ENCODE measurements at regions of chr17 and their contacts with region 1.

Region 1: GRCh38 chr17:40121181-40122135 is at the start of gene MSL1:
- DNase-seq: no peak
- ATAC-seq: peak; percentile 79
- H3K4me3 ChIP-seq: peak within 1 kb of the TSS; percentile 76 to 93
- H3K27ac ChIP-seq: peak within 1 kb of the TSS; percentile 92
- H3K4me1 ChIP-seq: peaks cover 15% of the 10 kb centered on the region
- H3K27me3 ChIP-seq: no peaks in the 10 kb centered on the region
- CTCF ChIP-seq: no peak
- total RNA-seq, gene MSL1: 96.3 TPM

Region 2: DNA sequence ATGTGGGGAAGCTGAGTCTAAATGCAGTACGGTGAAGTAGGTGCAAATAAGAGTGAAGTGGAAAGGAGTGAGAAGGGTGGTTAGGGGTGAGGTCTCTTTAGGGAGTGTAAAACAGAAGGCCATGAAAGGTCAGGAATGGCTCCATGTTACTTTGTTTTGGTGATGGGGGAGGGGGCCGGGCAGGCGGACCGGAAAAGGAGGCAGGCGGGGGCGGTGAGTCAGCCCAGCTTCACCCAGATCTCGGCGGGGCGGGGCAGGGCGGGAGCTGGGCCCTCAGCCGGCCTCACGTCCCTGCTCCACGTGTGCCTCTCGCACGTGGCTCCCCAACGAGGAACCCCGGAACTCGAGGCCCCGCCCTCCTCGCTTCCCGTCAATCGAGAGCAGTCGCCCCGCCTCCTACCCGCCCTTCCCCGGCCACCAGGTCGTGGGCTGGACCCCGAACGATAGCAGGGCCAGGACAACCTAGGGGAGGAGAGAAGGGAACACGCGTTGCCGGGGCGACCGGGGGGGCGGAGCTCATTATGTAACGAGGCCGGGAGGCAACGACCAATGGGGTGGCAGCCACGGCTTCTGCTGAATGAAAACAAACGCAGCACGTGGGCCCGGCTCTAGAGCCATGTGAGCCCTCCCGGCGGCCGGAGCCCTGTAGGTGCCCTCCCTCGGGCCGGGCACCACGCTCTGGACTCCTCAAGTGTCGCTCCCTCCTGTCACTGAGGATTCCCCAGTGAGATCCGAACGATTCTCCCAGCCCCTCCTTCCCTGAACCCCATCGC is 22.4 kb before region 1 on chr17:
- CTCF ChIA-PET with region 1: no interaction called
- POLR2A ChIA-PET with region 1: interaction called, 12 read pairs
- in situ Hi-C with region 1: no loop called
- intact Hi-C with region 1: no loop called
- DNase-seq: peak; percentile 97
- ATAC-seq: peak; percentile 85
- H3K4me3 ChIP-seq: peak overlapping the region; percentile 87 to 98
- H3K27ac ChIP-seq: peak overlapping the region; percentile 89
- H3K4me1 ChIP-seq: peaks cover 32% of the 10 kb centered on the region
- H3K27me3 ChIP-seq: no peaks in the 10 kb centered on the region
- CTCF ChIP-seq: no peak

Region 3: DNA sequence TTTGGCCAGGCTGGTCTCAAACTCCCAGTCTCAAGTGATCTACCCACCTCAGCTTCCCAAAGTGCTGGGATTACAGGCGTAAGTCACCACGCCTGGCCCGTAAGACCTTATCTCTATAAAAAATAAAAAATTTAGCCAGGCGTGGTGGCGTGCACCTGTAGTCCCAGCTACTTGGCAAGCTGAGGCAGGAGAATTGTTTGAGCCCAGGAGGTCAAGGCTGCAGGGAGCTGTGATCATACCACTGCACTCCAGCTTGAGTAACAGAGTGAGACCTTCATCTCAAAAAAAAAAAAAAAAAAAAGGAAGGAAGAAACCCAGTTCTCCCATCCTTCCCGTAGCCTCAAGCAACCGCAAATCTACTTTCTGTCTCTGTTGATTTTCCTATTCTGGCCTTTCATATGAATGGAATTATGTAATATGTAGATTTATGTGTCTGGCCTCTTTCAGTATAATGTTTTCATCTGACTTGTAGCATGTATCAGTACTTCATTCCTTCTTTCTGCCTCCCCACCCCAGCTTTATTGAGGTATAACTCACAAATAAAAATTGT is 30.0 kb after region 1 on chr17:
- CTCF ChIA-PET with region 1: no interaction called
- POLR2A ChIA-PET with region 1: interaction called, 10 read pairs
- in situ Hi-C with region 1: no loop called
- intact Hi-C with region 1: no loop called
- DNase-seq: no peak
- ATAC-seq: no peak
- H3K4me3 ChIP-seq: no peak overlapping the region
- H3K27ac ChIP-seq: no peak overlapping the region
- H3K4me1 ChIP-seq: no peaks in the 10 kb centered on the region
- H3K27me3 ChIP-seq: no peaks in the 10 kb centered on the region
- CTCF ChIP-seq: no peak

Region 4: DNA sequence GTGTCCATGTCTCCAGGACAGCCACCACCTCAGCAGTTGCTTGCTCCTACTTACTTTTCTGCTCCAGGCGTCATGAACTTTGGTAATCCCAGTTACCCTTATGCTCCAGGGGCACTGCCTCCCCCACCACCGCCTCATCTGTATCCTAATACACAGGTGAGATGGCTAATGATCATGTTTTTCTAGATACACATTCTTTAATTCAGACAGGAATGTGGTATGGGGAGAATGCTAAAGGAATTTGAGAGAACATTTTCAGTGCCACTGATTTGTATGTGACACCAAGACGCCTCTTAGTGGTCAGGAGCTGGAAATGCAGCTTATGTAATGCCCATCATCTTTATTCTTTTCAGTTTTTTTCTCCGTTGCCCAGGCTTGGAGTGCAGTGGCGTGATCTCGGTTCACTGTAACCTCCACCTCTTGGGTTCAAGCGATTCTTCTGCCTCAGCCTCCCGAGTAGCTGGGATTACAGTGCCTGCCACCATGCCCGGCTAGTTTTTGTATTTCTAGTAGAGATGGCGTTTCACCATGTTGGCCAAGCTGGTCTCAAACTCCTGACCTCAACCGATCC is 46.9 kb after region 1 on chr17:
- CTCF ChIA-PET with region 1: interaction called, 6 read pairs
- POLR2A ChIA-PET with region 1: interaction called, 13 read pairs
- in situ Hi-C with region 1: no loop called
- intact Hi-C with region 1: no loop called
- DNase-seq: peak; percentile 41
- ATAC-seq: peak; percentile 83
- H3K4me3 ChIP-seq: no peak overlapping the region
- H3K27ac ChIP-seq: no peak overlapping the region
- H3K4me1 ChIP-seq: no peaks in the 10 kb centered on the region
- H3K27me3 ChIP-seq: no peaks in the 10 kb centered on the region
- CTCF ChIP-seq: peak; percentile 87

Region 5: DNA sequence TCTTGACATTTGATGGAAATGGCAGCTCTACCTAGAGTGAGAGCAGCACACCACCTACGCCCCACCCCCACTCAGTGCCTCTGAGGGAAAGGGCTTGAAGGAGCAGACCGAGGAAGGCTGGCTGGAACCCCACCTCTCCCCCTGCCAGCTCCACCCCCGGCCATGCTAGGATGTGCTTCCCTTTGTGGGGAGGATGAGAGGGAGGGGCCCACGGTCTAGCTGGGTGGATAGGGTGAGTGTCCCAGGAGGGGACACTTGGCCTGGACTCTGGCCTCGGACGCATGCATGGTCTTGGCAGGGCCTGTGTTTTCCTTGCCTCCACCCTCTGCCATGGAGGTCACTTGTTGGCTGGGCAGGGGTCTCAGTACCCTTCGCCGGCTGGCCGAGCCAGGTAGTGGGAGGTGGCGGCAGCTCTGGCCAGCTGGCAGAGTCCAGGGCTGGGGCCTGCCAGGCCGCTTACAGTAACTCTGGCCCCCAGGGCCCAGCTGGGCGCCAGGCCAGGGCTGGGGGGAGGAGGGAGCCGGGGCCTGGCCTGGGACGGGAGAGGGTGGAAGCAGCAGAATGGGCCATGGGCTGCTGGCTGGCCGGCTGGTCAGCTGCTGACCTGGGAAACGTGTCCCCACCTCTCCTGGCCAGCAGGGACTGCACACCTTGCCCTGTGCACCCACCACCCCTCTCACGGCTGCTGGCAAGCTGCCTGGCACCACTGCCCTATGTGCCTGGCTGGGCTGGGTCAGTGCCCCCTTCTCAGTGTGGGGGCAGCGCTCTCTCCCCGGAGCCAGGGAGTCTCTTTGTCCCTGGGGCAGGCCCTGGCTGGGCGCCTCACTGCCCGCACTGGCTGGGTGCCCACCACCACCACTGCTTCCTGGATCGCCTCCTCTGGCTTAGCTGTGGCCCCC is 210.5 kb after region 1 on chr17:
- CTCF ChIA-PET with region 1: no interaction called
- POLR2A ChIA-PET with region 1: no interaction called
- in situ Hi-C with region 1: no loop called
- intact Hi-C with region 1: no loop called
- DNase-seq: no peak
- ATAC-seq: peak; percentile 86
- H3K4me3 ChIP-seq: 0 out of 4 replicates have a peak overlapping the region, but pooled peaks of 1 of the 2 experiments have one; percentile 17
- H3K27ac ChIP-seq: peak overlapping the region; percentile 90
- H3K4me1 ChIP-seq: peaks cover 72% of the 10 kb centered on the region
- H3K27me3 ChIP-seq: no peaks in the 10 kb centered on the region
- CTCF ChIP-seq: no peak

Measured in Panc1 (cell line).